Colonic mucosa (tissue), 4 donors: ENCODE measurements at regions of chr2 and their contacts with region 1.

Region 1: GRCh38 chr2:222982010-222982908 is 69.7 kb upstream of the KCNE4 start:
- DNase-seq: peak; percentile 28
- H3K4me3 ChIP-seq: no peak overlapping the region
- H3K27ac ChIP-seq: no peak overlapping the region
- H3K4me1 ChIP-seq: no peaks in the 10 kb centered on the region
- H3K27me3 ChIP-seq: no peaks in the 10 kb centered on the region
- CTCF ChIP-seq: peak; percentile 34

Region 2: DNA sequence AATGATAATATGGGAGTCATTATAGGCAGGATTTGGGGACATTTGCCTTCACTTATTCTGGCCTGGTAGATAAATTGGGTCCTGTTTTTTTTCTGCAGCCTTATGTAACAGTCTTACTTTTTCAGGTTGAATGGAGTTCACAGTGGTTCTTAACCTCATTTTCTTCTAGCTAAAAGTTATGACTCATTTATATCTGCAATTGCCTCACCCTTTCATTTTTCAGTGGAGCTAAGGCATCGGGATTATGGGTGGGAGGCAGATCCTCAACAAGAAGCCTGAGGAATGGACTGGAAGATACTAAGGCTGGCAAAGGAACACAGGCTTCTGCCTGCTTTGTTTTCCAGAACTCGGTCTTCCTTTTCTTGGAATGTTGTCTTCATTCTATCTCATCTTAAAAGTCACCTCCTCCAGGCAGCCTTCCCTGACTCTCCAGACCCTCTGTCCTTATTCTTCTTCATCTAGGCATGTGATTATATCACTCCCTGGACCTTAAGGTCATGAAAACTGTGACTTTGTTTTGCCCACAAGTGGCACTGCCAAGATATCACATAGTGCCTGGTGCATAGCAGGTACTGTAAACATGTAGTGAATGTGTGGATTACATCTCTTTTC is 162.4 kb before region 1 on chr2:
- intact Hi-C with region 1: no loop called
- DNase-seq: no peak
- H3K4me3 ChIP-seq: no peak overlapping the region
- H3K27ac ChIP-seq: no peak overlapping the region
- H3K4me1 ChIP-seq: no peaks in the 10 kb centered on the region
- H3K27me3 ChIP-seq: no peaks in the 10 kb centered on the region
- CTCF ChIP-seq: no peak

Region 3: GRCh38 chr2:223101340-223102039 is 119.2 kb after region 1 on chr2:
- intact Hi-C with region 1: loop called (anchors 5 kb)
- DNase-seq: peak; percentile 48
- H3K4me3 ChIP-seq: no peak overlapping the region
- H3K27ac ChIP-seq: no peak overlapping the region
- H3K4me1 ChIP-seq: no peaks in the 10 kb centered on the region
- H3K27me3 ChIP-seq: no peaks in the 10 kb centered on the region
- CTCF ChIP-seq: peak; percentile 37